Transverse colon (tissue), 4 donors: ENCODE measurements at regions of chr1 and their contacts with region 1.

Region 1: DNA sequence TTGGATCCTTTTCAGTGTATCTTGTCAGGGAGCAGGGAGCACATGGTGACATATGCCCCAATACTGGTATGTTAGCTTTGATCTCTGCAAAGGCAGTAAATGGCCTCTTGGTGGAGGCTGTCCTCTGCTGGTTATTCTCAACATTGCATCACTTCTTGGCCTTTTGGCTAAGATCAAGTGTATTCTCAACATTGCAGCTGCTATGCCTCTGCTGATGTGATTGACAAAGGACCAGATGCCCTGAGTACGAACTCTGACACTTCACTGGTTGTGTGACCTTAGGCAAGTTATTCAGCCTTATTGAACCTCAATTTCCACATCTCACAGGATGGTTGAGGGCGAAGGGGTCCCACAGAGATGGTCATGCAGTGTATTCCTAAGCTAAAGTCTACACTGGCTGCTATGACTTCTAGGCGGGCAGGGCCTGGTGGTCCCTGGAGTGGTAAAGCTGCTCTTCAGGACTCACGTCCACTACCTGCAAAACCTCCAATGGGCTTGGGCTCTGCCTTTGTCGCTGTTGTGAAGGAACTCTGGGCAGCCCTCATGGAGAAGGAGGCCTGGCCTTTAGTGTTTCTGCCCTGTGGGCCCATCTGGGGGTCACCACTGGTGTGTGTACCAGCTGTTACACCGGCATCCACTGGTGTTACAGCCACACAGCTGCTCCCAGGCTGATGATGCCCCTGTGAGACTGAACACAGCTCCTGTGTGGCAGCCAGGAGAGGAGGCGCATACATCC is 64.8 kb downstream of the DNTTIP2 start:
- DNase-seq: peak; percentile 59
- H3K4me3 ChIP-seq: no peak overlapping the region
- H3K27ac ChIP-seq: no peak overlapping the region
- H3K4me1 ChIP-seq: peaks cover 0 to 16% (median 4%) of the 10 kb centered on the region in 4 donors
- H3K27me3 ChIP-seq: no peaks in the 10 kb centered on the region
- CTCF ChIP-seq: peak; percentile 93 to 97 (median 95)
- EP300 ChIP-seq: no peak
- POLR2A ChIP-seq: no peak

Region 2: DNA sequence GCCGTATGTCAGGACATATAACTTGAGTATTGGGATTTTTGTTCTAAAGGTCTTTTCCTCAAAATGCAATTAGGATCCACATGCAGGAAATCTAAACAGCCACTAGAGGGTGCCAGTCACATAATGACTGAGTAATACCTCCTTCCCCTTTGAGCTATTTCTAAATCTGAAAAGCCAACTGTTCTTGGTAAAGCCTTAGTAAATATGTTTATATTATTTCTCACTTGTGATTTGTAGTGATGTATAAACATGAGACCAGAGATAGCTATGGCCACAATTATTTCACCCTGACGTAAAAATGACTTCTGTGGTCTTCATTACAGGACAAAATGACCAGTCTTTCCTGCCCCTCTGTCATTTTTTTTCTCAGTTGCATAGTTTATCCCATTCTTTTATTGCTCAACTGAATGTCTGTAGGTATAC is 509.5 kb before region 1 on chr1:
- in situ Hi-C with region 1: loop called in 1 of 4 experiments (anchors 25 kb)
- intact Hi-C with region 1: no loop called
- DNase-seq: peak; percentile 49
- H3K4me3 ChIP-seq: no peak overlapping the region
- H3K27ac ChIP-seq: no peak overlapping the region
- H3K4me1 ChIP-seq: no peaks in the 10 kb centered on the region
- H3K27me3 ChIP-seq: no peaks in the 10 kb centered on the region
- CTCF ChIP-seq: peak; percentile 81 to 95 (median 84)
- EP300 ChIP-seq: no peak
- POLR2A ChIP-seq: no peak

Region 3: DNA sequence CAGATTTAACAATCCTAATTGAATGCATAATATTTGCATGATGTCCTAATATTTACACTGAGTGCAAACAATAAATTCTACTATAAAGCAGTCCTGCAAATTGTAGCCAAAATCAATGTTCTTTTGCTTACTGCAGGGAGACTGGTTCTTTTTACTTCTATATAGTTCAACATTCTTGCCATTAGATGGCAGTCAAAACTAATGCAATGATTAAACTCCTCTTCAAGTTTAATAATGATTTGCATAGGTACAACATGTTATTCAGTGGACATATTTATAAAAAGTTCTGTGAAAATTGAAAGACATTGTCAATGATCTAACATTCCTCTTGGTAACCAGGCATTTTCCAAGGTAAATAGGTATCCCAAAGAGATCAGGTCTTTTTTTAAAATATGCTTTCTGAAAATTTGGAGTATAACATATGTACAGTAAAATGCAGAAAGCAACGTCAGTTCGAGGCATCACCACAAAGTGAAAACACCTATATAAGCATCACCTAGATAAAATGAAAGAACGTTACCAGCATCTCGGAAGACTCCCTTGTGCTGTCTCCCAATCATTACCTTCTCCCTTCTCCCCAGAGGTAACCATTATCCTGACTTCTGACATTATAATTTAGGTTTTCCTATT is 376.1 kb before region 1 on chr1:
- in situ Hi-C with region 1: loop called in 3 of 4 experiments (anchors 10 to 25 kb)
- intact Hi-C with region 1: no loop called
- DNase-seq: no peak
- H3K4me3 ChIP-seq: no peak overlapping the region
- H3K27ac ChIP-seq: no peak overlapping the region
- H3K4me1 ChIP-seq: peaks cover 0 to 13% (median 3%) of the 10 kb centered on the region in 4 donors
- H3K27me3 ChIP-seq: no peaks in the 10 kb centered on the region
- CTCF ChIP-seq: peak; percentile 57 to 72 (median 67)
- EP300 ChIP-seq: no peak
- POLR2A ChIP-seq: no peak

Region 4: GRCh38 chr1:93447516-93448291 is 366.5 kb before region 1 on chr1 and contains the start of gene FNBP1L:
- in situ Hi-C with region 1: loop called in 1 of 4 experiments (anchors 25 kb)
- intact Hi-C with region 1: no loop called
- DNase-seq: peak; percentile 84
- H3K4me3 ChIP-seq: peak within 1 kb of the TSS; percentile 75 to 90 (median 83)
- H3K27ac ChIP-seq: peak within 1 kb of the TSS; percentile 90 to 94 (median 92)
- H3K4me1 ChIP-seq: peaks cover 0 to 41% (median 10%) of the 10 kb centered on the region in 4 donors
- H3K27me3 ChIP-seq: no peaks in the 10 kb centered on the region
- CTCF ChIP-seq: no peak
- EP300 ChIP-seq: no peak
- POLR2A ChIP-seq: peak; percentile 75
- total RNA-seq, gene FNBP1L: 31.0 to 69.4 (median 49.0) TPM

Region 5: GRCh38 chr1:93635614-93636543 is 178.3 kb before region 1 on chr1:
- in situ Hi-C with region 1: loop called in 3 of 4 experiments (anchors 5 to 10 kb)
- intact Hi-C with region 1: loop called (anchors 2 kb)
- DNase-seq: no peak
- H3K4me3 ChIP-seq: no peak overlapping the region
- H3K27ac ChIP-seq: peak overlapping the region in 2 of 4 donors; percentile 17 to 32
- H3K4me1 ChIP-seq: no peaks in the 10 kb centered on the region
- H3K27me3 ChIP-seq: no peaks in the 10 kb centered on the region
- CTCF ChIP-seq: no peak
- EP300 ChIP-seq: no peak
- POLR2A ChIP-seq: no peak

Region 6: GRCh38 chr1:94468708-94469107 is 654.5 kb after region 1 on chr1:
- in situ Hi-C with region 1: no loop called
- intact Hi-C with region 1: no loop called
- DNase-seq: no peak
- H3K4me3 ChIP-seq: no peak overlapping the region
- H3K27ac ChIP-seq: no peak overlapping the region
- H3K4me1 ChIP-seq: peaks cover 0 to 9% (median 0%) of the 10 kb centered on the region in 4 donors
- H3K27me3 ChIP-seq: no peaks in the 10 kb centered on the region
- CTCF ChIP-seq: no peak
- EP300 ChIP-seq: no peak
- POLR2A ChIP-seq: no peak